ENCODE measurements at regions of chr19 and their contacts with region 1.

Region 1: GRCh38 chr19:45817010-45817724 is 2.1 kb upstream of the RSPH6A start:
- DNase-seq: peak; percentile 92 to 95 (median 92)
- H3K4me3 ChIP-seq: no peak overlapping the region
- H3K4me3 Mint-ChIP-seq: peak overlapping the region in 2 of 8 donors; percentile 28 to 62
- H3K27ac ChIP-seq: no peak overlapping the region
- H3K27ac Mint-ChIP-seq: peak overlapping the region in 5 of 7 donors; percentile 36 to 89 (median 74)
- H3K4me1 ChIP-seq: peaks cover 4% of the 10 kb centered on the region
- H3K4me1 Mint-ChIP-seq: peaks cover 0 to 6% (median 4%) of the 10 kb centered on the region in 4 donors
- H3K27me3 ChIP-seq: no peaks in the 10 kb centered on the region
- H3K27me3 Mint-ChIP-seq: no peaks in the 10 kb centered on the region

Region 2: DNA sequence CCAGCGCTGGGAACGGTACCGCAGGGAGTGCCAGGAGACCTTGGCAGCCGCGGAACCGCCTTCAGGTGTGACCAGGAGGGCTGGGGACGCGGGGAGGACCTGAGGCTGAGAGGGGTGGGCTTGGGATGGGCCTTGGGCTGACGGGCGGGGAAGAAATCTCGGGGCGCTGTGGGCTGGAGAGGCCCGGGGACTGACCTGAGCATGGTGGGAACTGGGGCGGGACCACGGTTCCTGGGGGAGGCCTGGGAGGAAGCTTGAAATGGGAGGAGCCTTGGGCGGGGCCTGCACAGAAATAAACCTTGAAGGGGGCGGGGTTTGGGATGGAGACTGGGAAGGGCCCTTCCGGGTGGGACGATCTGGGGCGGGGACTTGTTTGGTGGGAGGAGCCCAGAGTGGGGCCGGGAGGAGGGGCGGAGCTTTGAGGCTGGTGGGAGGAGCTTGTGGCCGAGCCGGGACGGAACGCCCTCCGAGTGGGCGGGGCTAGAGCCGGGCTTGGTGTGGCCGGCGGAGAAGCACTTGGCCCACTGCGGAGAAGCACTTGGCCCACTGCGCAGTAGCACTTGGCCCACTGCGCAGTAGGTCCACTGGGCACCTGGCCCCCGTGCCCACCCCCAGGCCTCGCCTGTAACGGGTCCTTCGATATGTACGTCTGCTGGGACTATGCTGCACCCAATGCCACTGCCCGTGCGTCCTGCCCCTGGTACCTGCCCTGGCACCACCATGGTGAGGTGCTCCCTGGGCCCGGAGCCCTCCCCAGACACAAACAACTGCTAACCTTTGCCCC is 146.3 kb before region 1 on chr19:
- CTCF ChIA-PET with region 1: no interaction called
- POLR2A ChIA-PET with region 1: no interaction called
- intact Hi-C with region 1: no loop called
- DNase-seq: peak in 2 of 5 donors; percentile 20 to 44
- H3K4me3 ChIP-seq: no peak overlapping the region
- H3K4me3 Mint-ChIP-seq: peak overlapping the region in 4 of 8 donors; percentile 14 to 56 (median 44)
- H3K27ac ChIP-seq: no peak overlapping the region
- H3K27ac Mint-ChIP-seq: peak overlapping the region in 2 of 7 donors; percentile 44 to 65
- H3K4me1 ChIP-seq: peaks cover 29% of the 10 kb centered on the region
- H3K4me1 Mint-ChIP-seq: peaks cover 18 to 37% (median 26%) of the 10 kb centered on the region in 4 donors
- H3K27me3 ChIP-seq: no peaks in the 10 kb centered on the region
- H3K27me3 Mint-ChIP-seq: peaks cover 4 to 17% of the 10 kb centered on the region in 2 donors

Region 3: DNA sequence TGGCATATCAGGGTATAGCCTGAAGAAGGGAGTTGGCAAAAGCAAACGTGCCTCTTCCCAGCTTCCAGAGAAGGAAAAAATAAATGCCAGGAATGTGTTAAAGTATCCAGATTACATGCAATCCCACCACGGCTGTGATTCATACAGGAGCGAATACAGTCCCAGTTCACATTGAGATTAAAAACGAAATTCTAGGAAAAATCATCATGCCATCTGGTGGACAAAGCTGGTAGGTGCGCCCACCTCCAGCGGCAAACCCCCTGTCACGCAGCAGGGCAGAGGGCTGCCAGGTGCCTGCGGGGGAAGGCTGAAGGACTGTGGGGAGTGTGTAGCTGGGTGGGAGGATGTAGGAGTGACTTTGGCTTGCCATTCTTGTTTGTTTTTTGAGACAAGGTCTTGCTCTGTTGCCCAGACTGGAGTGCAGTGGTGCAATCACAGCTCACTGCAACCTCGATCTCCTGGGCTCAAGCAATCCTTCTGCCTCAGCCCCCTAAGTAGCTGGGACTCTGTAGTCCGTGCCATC is 18.1 kb before region 1 on chr19:
- CTCF ChIA-PET with region 1: interaction called, 14 read pairs
- POLR2A ChIA-PET with region 1: interaction called, 3 read pairs
- intact Hi-C with region 1: no loop called
- DNase-seq: peak in 4 of 5 donors; percentile 57 to 65 (median 59)
- H3K4me3 ChIP-seq: no peak overlapping the region
- H3K4me3 Mint-ChIP-seq: no peak overlapping the region
- H3K27ac ChIP-seq: no peak overlapping the region
- H3K27ac Mint-ChIP-seq: peak overlapping the region in 1 of 7 donors; percentile 71
- H3K4me1 ChIP-seq: peaks cover 4% of the 10 kb centered on the region
- H3K4me1 Mint-ChIP-seq: peaks cover 4 to 12% (median 6%) of the 10 kb centered on the region in 4 donors
- H3K27me3 ChIP-seq: peaks cover 7% of the 10 kb centered on the region
- H3K27me3 Mint-ChIP-seq: peaks cover 13 to 20% of the 10 kb centered on the region in 2 donors

Region 4: GRCh38 chr19:45804140-45804958 is 12.8 kb before region 1 on chr19:
- CTCF ChIA-PET with region 1: interaction called, 14 read pairs
- POLR2A ChIA-PET with region 1: interaction called, 3 read pairs
- intact Hi-C with region 1: no loop called
- DNase-seq: no peak
- H3K4me3 ChIP-seq: no peak overlapping the region
- H3K4me3 Mint-ChIP-seq: no peak overlapping the region
- H3K27ac ChIP-seq: no peak overlapping the region
- H3K27ac Mint-ChIP-seq: no peak overlapping the region
- H3K4me1 ChIP-seq: no peaks in the 10 kb centered on the region
- H3K4me1 Mint-ChIP-seq: no peaks in the 10 kb centered on the region
- H3K27me3 ChIP-seq: peaks cover under 1% of the 10 kb centered on the region
- H3K27me3 Mint-ChIP-seq: peaks cover 3 to 6% of the 10 kb centered on the region in 2 donors

Region 5: DNA sequence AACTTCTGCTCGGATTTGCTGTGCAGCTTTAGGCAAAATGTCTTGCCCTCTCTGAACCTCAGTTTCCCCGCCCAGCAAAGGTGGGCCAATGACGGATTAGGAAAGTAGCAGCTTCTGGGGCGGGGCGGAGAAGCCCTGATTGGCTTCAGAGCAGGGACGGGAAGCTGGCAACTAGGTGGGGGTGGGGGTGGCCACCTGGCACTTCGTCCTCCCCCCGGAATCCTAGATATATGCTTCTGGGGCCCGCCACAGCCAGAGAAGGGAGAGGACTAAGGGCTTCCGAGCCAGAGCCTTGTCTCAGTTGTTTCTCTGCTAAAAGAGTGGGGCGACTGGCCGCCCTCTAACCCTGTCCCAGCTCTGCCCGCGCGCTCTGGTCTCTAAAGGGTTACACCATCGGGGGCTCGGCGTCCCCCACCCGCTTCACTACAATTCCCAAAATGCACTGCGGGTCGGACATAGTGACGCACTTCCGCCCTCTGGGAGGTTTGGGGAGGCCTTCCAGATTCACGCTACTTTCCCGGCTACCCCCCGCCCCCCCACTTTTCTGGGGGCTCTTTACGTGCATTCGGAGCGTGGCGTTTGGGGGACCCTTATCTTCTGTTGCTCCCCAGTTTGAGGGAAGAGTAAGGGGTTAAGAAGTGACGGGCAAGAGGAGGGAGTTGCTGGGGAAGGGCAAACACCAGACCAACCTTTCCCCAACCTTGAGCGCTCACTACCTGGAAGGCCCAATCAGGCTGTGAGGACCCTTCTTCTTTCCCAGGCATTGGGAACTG is 69.4 kb after region 1 on chr19:
- CTCF ChIA-PET with region 1: interaction called, 23 read pairs
- POLR2A ChIA-PET with region 1: interaction called, 5 read pairs
- intact Hi-C with region 1: loop called (anchors 1 kb)
- DNase-seq: peak; percentile 87 to 93 (median 91)
- H3K4me3 ChIP-seq: peak overlapping the region; percentile 65 to 71
- H3K4me3 Mint-ChIP-seq: peak overlapping the region; percentile 94 to 98 (median 98)
- H3K27ac ChIP-seq: peak overlapping the region; percentile 68
- H3K27ac Mint-ChIP-seq: peak overlapping the region; percentile 97 to 99 (median 99)
- H3K4me1 ChIP-seq: peaks cover 40% of the 10 kb centered on the region
- H3K4me1 Mint-ChIP-seq: peaks cover 11 to 36% (median 19%) of the 10 kb centered on the region in 4 donors
- H3K27me3 ChIP-seq: no peaks in the 10 kb centered on the region
- H3K27me3 Mint-ChIP-seq: peaks cover 0 to under 1% of the 10 kb centered on the region in 2 donors

Region 6: DNA sequence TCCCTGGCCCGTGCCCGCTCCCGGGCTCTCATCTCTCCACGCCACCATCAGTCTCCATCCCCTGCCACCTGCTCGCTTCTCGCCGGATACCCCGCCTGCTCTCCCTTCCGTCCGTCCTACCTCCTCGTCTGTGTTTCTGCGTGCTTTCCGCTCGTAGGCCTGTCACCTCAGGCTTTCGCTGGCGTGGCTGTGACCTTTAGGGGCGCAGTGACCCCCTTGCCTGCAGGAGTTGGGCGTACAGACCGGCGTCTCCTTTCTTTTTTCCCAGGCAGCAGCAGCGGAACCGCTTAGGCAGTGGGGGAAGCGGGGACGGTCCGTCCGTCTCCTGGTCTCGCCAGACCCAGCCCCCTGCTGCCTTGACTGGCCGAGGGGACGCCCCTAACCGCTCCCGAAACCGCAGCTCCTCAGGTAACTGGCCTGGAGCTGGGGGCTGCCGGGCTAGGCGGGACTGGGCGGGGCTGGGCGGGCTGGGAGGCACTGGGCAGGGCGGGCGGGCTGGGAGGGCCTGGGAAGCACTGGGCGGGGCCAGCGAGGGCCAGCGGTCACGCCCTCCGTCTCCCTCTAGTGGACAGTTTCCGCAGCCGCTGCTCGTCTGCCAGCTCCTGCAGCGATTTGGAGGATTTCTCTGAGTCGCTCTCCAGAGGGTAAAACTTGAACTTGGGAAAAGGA is 199.4 kb after region 1 on chr19:
- CTCF ChIA-PET with region 1: no interaction called
- POLR2A ChIA-PET with region 1: no interaction called
- intact Hi-C with region 1: loop called (anchors 1 kb)
- DNase-seq: peak; percentile 69 to 79 (median 76)
- H3K4me3 ChIP-seq: peak overlapping the region; percentile 76 to 80
- H3K4me3 Mint-ChIP-seq: peak overlapping the region; percentile 86 to 94 (median 91)
- H3K27ac ChIP-seq: peak overlapping the region; percentile 53
- H3K27ac Mint-ChIP-seq: peak overlapping the region; percentile 10 to 88 (median 71)
- H3K4me1 ChIP-seq: peaks cover 14% of the 10 kb centered on the region
- H3K4me1 Mint-ChIP-seq: peaks cover 12 to 21% (median 16%) of the 10 kb centered on the region in 4 donors
- H3K27me3 ChIP-seq: no peaks in the 10 kb centered on the region
- H3K27me3 Mint-ChIP-seq: peaks cover 0 to 5% of the 10 kb centered on the region in 2 donors

Region 7: DNA sequence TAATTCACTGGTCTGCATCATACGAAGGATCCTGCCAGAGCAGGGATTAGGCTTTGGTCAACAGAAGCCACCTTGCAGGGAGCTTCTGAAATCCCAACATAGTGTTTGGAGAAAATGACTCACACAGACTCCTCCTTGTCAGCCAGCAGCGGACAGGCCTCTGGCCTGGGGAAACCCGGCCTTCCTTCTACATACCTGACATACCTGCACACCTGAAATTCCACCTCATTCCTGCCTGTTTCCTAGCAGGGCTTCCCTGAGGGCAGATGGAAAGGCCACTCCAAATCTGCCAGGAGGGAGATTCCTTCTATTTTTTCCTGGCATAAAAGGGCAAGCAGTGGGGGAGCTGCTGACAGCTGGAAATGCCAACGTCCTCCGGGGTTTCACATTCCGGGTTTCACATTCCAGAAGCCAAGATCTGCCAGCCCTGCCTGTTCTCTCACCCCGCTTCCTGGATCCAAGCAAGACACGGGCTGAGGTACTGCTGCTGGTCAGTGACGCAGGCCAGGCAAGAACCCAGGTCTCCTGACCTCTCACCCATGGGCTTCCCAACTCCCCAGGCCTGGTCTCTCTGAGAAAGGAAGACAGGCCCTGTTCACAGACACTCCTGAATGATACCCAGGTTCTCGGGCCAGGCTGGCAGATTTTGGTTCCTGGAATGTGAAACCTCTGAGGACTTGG is 394.2 kb after region 1 on chr19:
- CTCF ChIA-PET with region 1: no interaction called
- POLR2A ChIA-PET with region 1: no interaction called
- intact Hi-C with region 1: no loop called
- DNase-seq: no peak
- H3K4me3 ChIP-seq: no peak overlapping the region
- H3K4me3 Mint-ChIP-seq: no peak overlapping the region
- H3K27ac ChIP-seq: no peak overlapping the region
- H3K27ac Mint-ChIP-seq: no peak overlapping the region
- H3K4me1 ChIP-seq: peaks cover 11% of the 10 kb centered on the region
- H3K4me1 Mint-ChIP-seq: peaks cover 9 to 15% (median 12%) of the 10 kb centered on the region in 4 donors
- H3K27me3 ChIP-seq: no peaks in the 10 kb centered on the region
- H3K27me3 Mint-ChIP-seq: peaks cover 12 to 26% of the 10 kb centered on the region in 2 donors